Ascending aorta (tissue), 2 donors: ENCODE measurements at regions of chr20 and their contacts with region 1.

Region 1: DNA sequence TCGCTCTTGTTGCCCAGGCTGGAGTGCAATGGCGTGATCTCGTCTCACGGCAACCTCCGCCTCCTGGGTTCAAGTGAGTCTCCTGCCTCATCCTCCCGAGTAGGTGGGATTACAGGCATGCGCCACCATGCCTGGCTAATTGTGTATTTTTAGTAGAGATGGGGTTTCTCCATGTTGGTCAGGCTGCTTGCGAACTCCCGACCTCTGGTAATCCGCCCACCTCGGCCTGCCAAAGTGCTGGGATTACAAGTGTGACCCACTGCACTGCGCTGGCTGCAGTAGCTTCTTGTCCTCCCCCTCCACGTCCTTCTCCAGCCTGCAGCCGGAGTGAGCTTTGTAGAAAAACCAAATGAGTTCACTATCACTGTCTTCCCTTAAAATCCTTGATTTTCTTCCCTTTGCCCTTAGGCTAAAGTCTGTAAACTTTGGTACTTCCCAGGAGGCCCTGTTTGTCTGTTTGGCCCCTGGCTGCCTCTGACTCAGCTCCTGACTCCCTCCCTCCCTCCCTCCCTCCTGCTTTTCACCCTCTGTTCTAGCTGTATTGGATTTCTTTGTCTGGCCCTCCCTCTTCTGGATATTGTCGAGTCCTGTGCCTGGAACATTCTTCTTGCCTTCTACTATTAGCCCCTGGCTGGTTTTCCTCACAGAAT is 12.9 kb downstream of the PARD6B start:
- DNase-seq: peak in 1 of 2 donors; percentile 87
- H3K4me3 ChIP-seq: no peak overlapping the region
- H3K27ac ChIP-seq: peak overlapping the region; percentile 78 to 89
- H3K4me1 ChIP-seq: peaks cover 0 to 5% of the 10 kb centered on the region in 2 donors
- H3K27me3 ChIP-seq: no peaks in the 10 kb centered on the region
- CTCF ChIP-seq: peak; percentile 34 to 59 (median 45)

Region 2: DNA sequence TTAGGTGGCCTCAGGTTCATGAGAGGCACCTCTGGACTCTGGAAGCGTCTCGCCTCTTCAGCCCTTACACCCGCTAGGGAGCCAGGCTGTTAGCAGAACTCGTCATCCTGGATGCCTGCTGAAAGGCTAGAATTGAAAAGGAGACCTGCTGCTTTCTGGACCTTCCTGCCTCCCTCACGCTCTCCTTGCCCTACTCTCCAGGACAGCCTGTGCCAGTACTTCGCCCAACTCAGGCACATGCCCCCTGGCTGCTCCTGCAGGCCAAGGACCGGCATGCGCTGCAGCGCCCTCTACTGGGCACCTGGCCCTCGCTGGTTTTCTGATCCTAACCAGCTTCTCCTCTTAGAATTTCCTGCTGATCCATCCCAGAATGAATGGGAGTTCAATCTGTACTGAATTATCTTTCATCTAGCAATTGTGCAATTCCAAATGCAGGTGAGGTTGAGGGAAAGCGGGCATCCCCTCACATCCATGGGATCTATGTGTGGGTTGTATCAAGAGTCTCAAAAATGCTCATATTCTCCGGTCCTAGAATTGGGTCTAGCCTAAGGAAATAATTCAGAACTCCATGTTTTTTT is 156.1 kb before region 1 on chr20:
- intact Hi-C with region 1: loop called (anchors 2 kb)
- DNase-seq: peak in 1 of 2 donors; percentile 82
- H3K4me3 ChIP-seq: no peak overlapping the region
- H3K27ac ChIP-seq: no peak overlapping the region
- H3K4me1 ChIP-seq: peaks cover 0 to 4% of the 10 kb centered on the region in 2 donors
- H3K27me3 ChIP-seq: no peaks in the 10 kb centered on the region
- CTCF ChIP-seq: peak; percentile 77 to 93 (median 87)

Region 3: DNA sequence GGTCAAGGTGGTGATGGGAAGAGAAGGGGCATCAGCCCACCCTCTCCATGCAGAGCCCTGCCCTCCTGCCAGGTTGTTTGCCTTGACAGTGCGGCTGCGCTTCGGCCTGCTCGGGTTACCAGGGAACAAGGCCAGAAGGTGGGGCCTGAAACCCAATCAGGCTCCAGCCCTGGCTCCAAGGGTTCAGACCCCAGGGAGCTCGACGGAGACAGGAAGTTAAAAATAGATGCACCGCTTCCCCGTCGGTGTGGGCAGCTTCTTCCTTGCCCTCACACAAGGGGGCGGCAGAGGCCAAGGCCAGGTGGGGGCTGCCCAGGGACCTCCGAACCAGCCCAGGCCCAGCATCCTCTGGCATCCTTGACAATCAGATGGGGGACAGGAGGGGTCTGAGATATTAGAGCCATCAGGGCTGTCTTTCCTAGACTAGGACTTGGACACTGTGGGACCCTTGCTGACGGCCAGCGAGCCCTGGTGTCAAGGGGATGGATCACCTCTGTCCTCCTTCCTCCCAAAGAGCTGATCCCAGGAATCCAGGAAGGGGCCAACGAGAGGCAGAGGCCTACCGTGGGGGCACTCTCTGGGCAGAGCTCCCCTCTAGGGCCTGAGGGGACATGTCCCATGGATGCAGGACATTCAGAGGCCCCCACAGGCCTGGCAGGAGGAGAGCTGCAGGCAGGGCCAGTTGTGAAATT is 118.1 kb before region 1 on chr20:
- intact Hi-C with region 1: loop called (anchors 2 kb)
- DNase-seq: peak in 1 of 2 donors; percentile 67
- H3K4me3 ChIP-seq: no peak overlapping the region
- H3K27ac ChIP-seq: no peak overlapping the region
- H3K4me1 ChIP-seq: no peaks in the 10 kb centered on the region
- H3K27me3 ChIP-seq: no peaks in the 10 kb centered on the region
- CTCF ChIP-seq: peak; percentile 29 to 61 (median 55)

Region 4: DNA sequence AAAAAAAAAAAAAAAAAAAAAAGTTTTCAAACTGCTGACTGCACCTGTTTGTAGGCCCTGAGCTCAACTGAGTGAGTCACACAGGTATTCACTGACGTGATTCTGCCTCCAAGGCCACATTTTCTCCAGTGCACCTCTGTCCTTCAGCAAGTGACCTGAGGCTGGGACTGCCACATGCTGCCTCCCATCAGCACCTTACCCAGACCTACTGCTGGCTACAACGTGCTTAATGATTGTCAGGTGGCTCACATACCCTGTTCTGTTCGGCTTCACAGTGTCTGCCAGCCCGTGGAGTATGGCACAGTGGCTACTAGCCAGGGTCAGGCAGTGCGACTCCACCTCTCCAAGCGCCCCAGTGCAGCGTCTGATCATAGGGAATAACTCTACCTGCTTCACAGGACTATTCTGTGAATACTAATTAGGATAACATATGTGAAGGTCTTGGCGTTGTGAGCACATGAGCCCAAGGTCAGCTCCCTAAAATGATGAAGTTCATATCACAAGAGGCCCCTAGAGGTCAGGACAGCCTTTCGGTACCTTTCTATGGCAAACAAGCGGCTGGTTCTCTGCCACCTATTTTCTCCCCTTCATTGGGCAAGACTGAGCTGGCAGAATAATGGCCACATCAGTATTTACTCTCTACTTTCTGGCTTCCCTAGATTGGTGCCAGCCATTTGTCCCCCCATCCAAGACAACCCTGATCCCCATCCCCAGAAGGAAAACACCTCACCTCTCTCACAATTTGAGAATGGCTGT is 81.0 kb before region 1 on chr20:
- intact Hi-C with region 1: loop called (anchors 5 kb)
- DNase-seq: no peak
- H3K4me3 ChIP-seq: no peak overlapping the region
- H3K27ac ChIP-seq: no peak overlapping the region
- H3K4me1 ChIP-seq: peaks cover 0 to 14% of the 10 kb centered on the region in 2 donors
- H3K27me3 ChIP-seq: no peaks in the 10 kb centered on the region
- CTCF ChIP-seq: no peak

Region 5: GRCh38 chr20:51043811-51044210 is 299.5 kb after region 1 on chr20:
- intact Hi-C with region 1: no loop called
- DNase-seq: no peak
- H3K4me3 ChIP-seq: no peak overlapping the region
- H3K27ac ChIP-seq: no peak overlapping the region
- H3K4me1 ChIP-seq: no peaks in the 10 kb centered on the region
- H3K27me3 ChIP-seq: no peaks in the 10 kb centered on the region
- CTCF ChIP-seq: no peak

Region 6: GRCh38 chr20:52150440-52151258 is 1406.4 kb after region 1 on chr20:
- intact Hi-C with region 1: no loop called
- DNase-seq: no peak
- H3K4me3 ChIP-seq: no peak overlapping the region
- H3K27ac ChIP-seq: no peak overlapping the region
- H3K4me1 ChIP-seq: no peaks in the 10 kb centered on the region
- H3K27me3 ChIP-seq: no peaks in the 10 kb centered on the region
- CTCF ChIP-seq: peak; percentile 19 to 77 (median 74)